ENCODE measurements at regions of chr19 and their contacts with region 1.

Region 1: DNA sequence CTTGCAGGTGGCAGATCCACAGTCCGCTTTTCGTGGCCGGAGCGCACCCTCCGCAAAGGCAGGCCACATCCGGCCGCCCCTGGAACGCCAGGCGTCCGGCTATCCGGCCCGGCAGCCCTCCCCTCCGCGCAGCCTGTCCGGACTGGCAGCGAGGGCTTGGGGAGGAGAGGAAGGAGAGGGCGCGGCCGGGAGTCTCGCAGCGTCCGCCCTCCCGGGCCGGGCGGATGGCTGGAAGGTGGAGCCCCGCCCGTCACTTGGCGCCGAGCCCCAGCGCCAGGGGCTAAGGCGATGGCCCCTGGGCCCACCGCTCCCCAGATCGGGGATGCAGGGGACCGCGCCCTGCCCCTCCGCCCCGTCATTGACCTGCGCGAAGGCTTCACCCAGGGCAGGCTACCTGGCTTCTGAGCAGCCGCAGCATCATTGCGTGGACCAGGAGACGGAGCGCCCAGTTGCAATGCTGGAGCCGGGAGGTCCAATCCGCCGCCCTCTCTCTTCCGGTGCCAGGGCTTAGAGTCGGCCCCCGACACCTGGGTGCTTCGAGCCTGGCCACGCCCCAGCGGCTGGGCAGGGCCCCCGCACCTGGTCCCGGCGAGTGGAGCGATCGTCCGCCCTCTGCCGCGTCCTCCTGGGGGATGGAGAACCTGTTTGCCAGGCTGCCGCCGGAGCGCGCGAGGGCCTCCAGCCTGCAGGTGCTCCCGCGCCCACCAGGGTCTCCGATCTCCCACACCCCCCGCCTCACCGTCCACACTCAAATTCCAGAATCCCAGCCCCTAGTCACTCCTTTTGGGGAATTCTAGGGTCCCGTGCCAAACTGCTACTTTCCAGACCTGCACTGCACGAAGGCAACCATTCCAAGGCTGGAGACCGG is at the start of gene FUT1:
- DNase-seq: no peak
- ATAC-seq: peak; percentile 68
- H3K4me3 Mint-ChIP-seq: peak within 1 kb of the TSS; percentile 64
- H3K27ac Mint-ChIP-seq: no peak within 1 kb of the TSS
- H3K4me1 Mint-ChIP-seq: peaks cover 9% of the 10 kb centered on the region
- H3K27me3 Mint-ChIP-seq: peaks cover 34% of the 10 kb centered on the region
- CTCF ChIP-seq: no peak
- total RNA-seq, gene FUT1: not detected in 2 replicates

Region 2: DNA sequence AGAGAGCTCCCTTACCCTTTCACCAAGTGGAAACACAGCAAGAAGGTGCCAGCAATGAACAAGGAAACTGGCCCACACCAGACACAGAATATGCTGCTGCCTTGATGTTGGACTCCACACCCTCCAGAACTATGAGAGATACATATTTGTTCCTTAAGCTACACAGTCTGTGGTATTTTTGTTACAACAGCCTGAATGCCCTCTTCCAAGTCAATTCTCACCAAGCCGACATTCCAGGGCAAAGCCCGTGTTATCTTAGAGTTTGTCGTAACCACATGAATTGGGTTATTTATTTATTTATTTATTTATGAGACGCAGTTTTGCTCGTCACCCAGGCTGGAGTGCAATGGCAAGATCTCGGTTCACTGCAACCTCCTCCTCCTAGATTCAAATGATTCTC is 17.5 kb after region 1 on chr19:
- CTCF ChIA-PET with region 1: no interaction called
- POLR2A ChIA-PET with region 1: no interaction called
- intact Hi-C with region 1: no loop called
- DNase-seq: no peak
- ATAC-seq: no peak
- H3K4me3 Mint-ChIP-seq: no peak overlapping the region
- H3K27ac Mint-ChIP-seq: no peak overlapping the region
- H3K4me1 Mint-ChIP-seq: no peaks in the 10 kb centered on the region
- H3K27me3 Mint-ChIP-seq: peaks cover 27% of the 10 kb centered on the region
- CTCF ChIP-seq: no peak

Region 3: DNA sequence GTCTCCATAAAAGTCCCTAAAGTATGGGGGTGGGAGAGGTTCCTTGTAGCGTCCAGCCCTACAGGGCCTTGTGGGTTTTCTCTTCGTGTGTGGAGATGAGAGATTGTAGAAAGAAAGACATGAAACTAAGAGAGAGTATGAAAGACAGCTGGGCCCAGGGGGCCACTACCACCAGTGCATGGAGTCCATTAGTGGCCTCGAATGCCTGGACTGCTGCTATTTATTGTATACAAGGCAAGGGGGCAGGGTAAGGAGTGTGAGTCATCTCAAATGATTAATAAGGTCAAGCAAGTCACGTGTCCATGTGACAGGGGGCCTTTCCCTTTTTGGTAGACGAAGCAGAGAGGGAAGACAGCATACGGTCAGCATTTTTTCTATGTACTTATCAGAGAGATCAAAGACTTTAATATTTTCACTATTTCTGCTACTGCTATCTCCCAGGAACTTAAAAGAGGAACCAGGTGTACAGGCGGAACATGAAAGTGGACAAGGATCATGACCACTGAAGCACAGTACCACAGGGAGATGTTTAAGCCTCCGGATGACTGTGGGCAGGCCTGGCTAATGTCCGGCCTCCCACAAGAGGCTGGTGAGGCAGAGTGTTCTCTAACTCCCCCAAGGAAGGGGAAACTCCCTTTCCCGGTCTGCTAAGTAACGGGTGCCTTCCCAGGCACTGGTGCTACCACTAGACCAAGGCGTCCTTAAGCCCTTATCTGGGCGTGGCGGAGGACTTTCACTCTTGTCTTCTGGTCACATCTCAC is 28.1 kb after region 1 on chr19:
- CTCF ChIA-PET with region 1: no interaction called
- POLR2A ChIA-PET with region 1: no interaction called
- intact Hi-C with region 1: loop called (anchors 2 kb)
- DNase-seq: no peak
- ATAC-seq: no peak
- H3K4me3 Mint-ChIP-seq: no peak overlapping the region
- H3K27ac Mint-ChIP-seq: peak overlapping the region; percentile 51
- H3K4me1 Mint-ChIP-seq: peaks cover 22% of the 10 kb centered on the region
- H3K27me3 Mint-ChIP-seq: no peaks in the 10 kb centered on the region
- CTCF ChIP-seq: no peak

Measured in activated B cell treated with CpG ODN at 0.5 μM for 24 hours (primary cell).